Heart right ventricle (tissue), 16 donors: ENCODE measurements at regions of chr9 and their contacts with region 1.

Region 1: DNA sequence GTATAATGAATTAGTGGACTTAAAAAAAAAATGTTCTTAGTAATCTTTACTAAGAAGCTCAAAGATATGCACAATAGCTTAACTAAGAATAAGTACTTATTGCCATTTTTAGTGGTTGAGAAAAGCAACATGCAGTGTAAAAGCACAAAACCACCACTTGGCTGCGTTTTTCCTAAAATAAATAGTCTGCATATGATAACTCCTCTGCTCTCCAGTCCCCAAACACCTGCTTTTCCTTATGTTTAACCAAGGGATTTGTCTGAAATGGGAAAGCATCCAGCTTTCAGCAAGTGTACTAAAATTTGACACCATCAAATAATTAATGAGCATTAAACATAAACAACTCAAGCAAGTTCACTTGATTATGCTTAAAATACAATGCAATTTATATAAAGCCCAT is 41.4 kb downstream of the PSIP1 start:
- DNase-seq: no peak
- ATAC-seq: no peak
- H3K4me3 ChIP-seq: no peak overlapping the region
- H3K27ac ChIP-seq: no peak overlapping the region
- H3K4me1 ChIP-seq: no peaks in the 10 kb centered on the region
- H3K27me3 ChIP-seq: no peaks in the 10 kb centered on the region
- CTCF ChIP-seq: no peak

Region 2: DNA sequence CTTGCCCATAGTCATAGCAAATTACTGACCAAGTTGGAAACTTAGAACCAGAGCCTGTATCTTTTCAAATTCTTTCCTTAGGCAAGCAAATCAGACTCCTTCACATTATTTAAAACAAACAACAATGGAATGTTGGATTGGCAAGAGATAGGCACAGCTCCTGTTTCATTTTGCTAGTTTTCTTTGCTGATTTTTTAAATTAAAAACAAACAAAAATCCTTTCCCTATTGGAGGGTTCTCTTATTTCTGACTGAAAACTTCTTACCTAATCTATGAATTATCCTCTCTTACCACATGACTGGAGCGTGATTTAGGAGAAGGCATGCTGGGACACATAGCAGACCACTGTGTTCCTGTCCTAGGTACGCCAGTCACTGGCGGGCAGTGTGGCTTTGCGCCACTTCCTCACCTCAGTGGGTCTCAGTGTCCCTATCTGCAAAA is 225.4 kb before region 1 on chr9:
- intact Hi-C with region 1: no loop called
- DNase-seq: no peak
- ATAC-seq: no peak
- H3K4me3 ChIP-seq: no peak overlapping the region
- H3K27ac ChIP-seq: peak overlapping the region in 1 of 10 donors; percentile 21
- H3K4me1 ChIP-seq: peaks cover 0 to 31% (median 9%) of the 10 kb centered on the region in 9 donors
- H3K27me3 ChIP-seq: no peaks in the 10 kb centered on the region
- CTCF ChIP-seq: no peak

Region 3: GRCh38 chr9:15370466-15371447 is 98.6 kb before region 1 on chr9:
- intact Hi-C with region 1: no loop called
- DNase-seq: no peak
- ATAC-seq: no peak
- H3K4me3 ChIP-seq: no peak overlapping the region
- H3K27ac ChIP-seq: no peak overlapping the region
- H3K4me1 ChIP-seq: peaks cover 0 to 10% (median 0%) of the 10 kb centered on the region in 9 donors
- H3K27me3 ChIP-seq: peaks cover 0 to 11% (median 0%) of the 10 kb centered on the region in 7 donors
- CTCF ChIP-seq: no peak

Region 4: DNA sequence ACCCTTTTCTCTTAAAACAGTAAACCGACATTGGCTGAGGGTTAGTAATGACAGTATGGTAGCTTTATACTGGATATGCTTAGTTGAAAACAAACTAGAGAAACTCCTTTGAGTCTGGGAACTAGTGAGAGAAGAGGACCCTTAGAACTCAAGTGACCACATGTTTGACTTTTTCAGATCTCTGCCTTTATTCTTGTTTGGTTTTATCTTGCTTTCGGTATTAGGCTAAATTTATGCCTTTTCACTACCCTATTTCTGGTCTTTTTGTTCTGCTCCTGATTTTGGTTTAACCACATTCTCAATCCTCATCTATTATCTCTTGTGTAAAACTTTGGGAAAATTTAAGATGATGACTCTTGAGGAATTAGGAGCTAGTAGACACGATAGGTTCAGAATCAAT is 35.7 kb before region 1 on chr9:
- intact Hi-C with region 1: loop called in 1 of 10 experiments (anchors 1 kb)
- DNase-seq: no peak
- ATAC-seq: no peak
- H3K4me3 ChIP-seq: no peak overlapping the region
- H3K27ac ChIP-seq: peak overlapping the region in 1 of 10 donors; percentile 23
- H3K4me1 ChIP-seq: peaks cover 0 to 36% (median 13%) of the 10 kb centered on the region in 9 donors
- H3K27me3 ChIP-seq: no peaks in the 10 kb centered on the region
- CTCF ChIP-seq: no peak

Region 5: DNA sequence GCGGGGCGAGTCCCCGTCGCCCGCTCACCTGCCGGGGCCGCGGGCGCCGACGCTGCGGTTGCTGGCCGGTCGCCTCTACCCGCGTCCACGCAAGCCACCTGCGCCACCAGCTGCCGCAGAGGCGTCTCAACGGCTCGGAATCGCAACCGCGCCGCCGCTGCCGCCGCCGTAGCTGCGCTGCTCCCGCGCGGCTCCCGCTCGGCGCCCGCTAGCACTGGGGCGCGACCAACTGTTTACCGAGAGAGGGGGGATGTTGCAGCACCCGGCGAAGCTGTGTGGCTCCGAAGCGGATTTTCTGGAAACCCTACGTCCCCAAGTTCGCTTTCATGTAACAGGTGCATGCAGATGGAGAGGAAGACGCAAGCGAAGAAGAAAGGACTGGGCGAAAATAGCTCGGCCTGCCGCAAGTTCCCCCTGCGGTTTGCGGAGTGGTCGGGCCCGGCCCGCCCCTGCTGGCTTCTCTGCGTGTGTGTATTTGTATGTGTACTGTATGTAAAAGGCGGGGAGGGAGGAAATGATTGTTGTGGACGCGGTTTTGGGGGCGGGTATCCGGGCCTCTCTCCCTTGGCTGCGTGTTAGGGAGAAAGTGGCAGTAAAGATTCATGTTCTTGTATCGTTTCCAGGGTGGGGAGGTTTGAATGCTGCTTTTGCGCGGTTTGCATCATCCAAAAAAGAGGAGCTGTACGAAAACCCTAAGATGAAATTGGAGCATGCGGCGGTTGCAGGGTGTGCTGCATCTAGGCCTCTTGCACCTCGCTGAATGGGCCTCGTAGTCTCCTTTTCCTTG is 41.6 kb after region 1 on chr9 and contains the start of gene PSIP1:
- intact Hi-C with region 1: loop called in 1 of 10 experiments (anchors 10 kb)
- DNase-seq: peak; percentile 81
- ATAC-seq: peak; percentile 92 to 97 (median 94)
- H3K4me3 ChIP-seq: peak within 1 kb of the TSS; percentile 69 to 98 (median 96)
- H3K27ac ChIP-seq: peak within 1 kb of the TSS; percentile 87 to 98 (median 94)
- H3K4me1 ChIP-seq: peaks cover 0 to 32% (median 18%) of the 10 kb centered on the region in 9 donors
- H3K27me3 ChIP-seq: no peaks in the 10 kb centered on the region
- CTCF ChIP-seq: peak in 2 of 9 donors; percentile 11 to 16
- total RNA-seq, gene PSIP1: 16.3 to 31.7 (median 21.3) TPM